HepG2 (cell line): ENCODE measurements at regions of chr7 and their contacts with region 1.

Region 1: GRCh38 chr7:47846117-47846836 is 102.0 kb downstream of the PKD1L1 start:
- DNase-seq: no peak
- ATAC-seq: no peak
- H3K4me3 ChIP-seq: no peak overlapping the region
- H3K27ac ChIP-seq: no peak overlapping the region
- H3K4me1 ChIP-seq: no peaks in the 10 kb centered on the region
- H3K27me3 ChIP-seq: peaks cover 0 to 25% of the 10 kb centered on the region in 2 experiments; a peak in 2 of 5 replicates
- CTCF ChIP-seq: no peak
- EP300 ChIP-seq: no peak
- POLR2A ChIP-seq: no peak
- RAD21 ChIP-seq: no peak

Region 2: DNA sequence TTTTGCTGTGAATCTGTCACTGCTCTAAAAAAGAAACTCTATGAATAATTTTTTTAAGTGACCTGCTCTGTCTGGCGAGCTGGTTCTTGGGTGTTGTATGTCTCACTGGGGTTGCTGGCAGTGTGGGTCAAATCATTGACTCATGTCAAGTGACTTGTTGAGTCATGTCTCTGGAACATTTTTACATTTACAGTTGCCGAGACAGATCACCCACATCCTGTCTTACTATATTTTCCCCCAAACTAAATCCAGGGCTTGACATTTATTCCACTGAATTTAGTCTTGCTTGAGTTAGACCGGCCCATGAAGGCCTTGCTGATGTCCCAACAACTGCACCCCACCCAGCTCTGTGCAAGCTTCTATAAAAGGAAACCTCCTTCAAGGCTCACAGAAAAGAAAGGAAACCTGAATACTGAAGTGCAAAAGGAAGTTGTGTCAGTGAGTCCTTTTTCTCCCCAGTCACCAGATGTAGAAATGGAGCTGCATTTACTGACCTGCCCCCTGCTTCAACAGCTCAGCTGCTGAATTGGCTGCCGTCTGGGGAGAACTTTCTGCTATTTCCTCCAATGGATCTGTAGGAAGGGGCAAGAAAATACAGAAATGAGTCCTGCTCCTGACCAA is 554.7 kb before region 1 on chr7:
- CTCF ChIA-PET with region 1: no interaction called
- POLR2A ChIA-PET with region 1: no interaction called
- in situ Hi-C with region 1: loop called (anchors 25 kb)
- intact Hi-C with region 1: no loop called
- DNase-seq: no peak
- ATAC-seq: no peak
- H3K4me3 ChIP-seq: no peak overlapping the region
- H3K27ac ChIP-seq: no peak overlapping the region
- H3K4me1 ChIP-seq: peaks cover 40% of the 10 kb centered on the region
- H3K27me3 ChIP-seq: no peaks in the 10 kb centered on the region
- CTCF ChIP-seq: no peak
- EP300 ChIP-seq: no peak
- POLR2A ChIP-seq: no peak
- RAD21 ChIP-seq: no peak

Region 3: GRCh38 chr7:47866120-47866519 is 19.8 kb after region 1 on chr7:
- CTCF ChIA-PET with region 1: no interaction called
- POLR2A ChIA-PET with region 1: no interaction called
- in situ Hi-C with region 1: no loop called
- intact Hi-C with region 1: no loop called
- DNase-seq: no peak
- ATAC-seq: no peak
- H3K4me3 ChIP-seq: no peak overlapping the region
- H3K27ac ChIP-seq: no peak overlapping the region
- H3K4me1 ChIP-seq: no peaks in the 10 kb centered on the region
- H3K27me3 ChIP-seq: no peaks in the 10 kb centered on the region
- CTCF ChIP-seq: no peak
- EP300 ChIP-seq: no peak
- POLR2A ChIP-seq: no peak
- RAD21 ChIP-seq: no peak

Region 4: GRCh38 chr7:47945261-47946001 is 99.2 kb after region 1 on chr7:
- CTCF ChIA-PET with region 1: no interaction called
- POLR2A ChIA-PET with region 1: no interaction called
- in situ Hi-C with region 1: no loop called
- intact Hi-C with region 1: no loop called
- DNase-seq: peak; percentile 57
- ATAC-seq: peak; percentile 61; the same call in 2 of the 3 replicates
- H3K4me3 ChIP-seq: no peak overlapping the region
- H3K27ac ChIP-seq: no peak overlapping the region
- H3K4me1 ChIP-seq: peaks cover 29% of the 10 kb centered on the region
- H3K27me3 ChIP-seq: peaks cover 2 to 7% of the 10 kb centered on the region in 2 experiments; a peak in 2 of 5 replicates
- CTCF ChIP-seq: peak; percentile 79
- EP300 ChIP-seq: no peak
- POLR2A ChIP-seq: no peak
- RAD21 ChIP-seq: peak; percentile 60; the same call in 1 of the 2 replicates